GM12878 (cell line): ENCODE measurements at regions of chrX and their contacts with region 1.

Region 1: DNA sequence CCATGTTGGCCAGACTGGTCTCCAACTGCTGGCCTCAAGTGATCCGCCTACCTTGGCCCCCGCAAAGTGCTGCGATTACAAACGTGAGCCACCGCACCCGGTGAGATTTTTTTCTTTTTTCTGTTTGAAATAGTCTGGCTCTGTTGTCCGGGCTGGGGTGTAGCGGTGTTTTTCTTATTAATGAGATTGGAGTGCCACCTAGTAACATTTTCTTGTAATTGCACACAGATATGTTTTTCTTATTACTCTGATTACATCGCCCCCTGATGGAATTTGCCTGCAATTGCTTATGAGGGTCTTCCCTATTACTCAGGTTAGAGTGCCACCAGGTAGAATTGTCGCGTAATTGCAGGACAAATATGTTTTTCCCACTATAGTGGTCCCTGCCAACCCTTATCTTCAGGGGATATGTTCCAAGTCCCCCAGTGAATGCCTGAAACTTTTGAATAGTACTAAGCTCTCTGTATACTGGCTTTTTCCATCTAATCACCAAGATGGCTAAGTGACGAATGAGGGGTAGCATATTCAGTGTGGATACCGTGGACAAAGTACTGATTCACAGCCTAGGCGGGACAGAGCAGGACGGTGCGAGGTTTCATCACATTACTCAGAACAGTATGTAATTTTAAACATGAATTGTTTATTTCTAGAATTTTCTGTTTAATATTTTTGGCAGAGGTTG is 8.6 kb upstream of the PDHA1 start:
- DNase-seq: peak; percentile 15
- ATAC-seq: peak; percentile 83
- H3K4me3 ChIP-seq: no peak overlapping the region
- H3K27ac ChIP-seq: no peak overlapping the region
- H3K4me1 ChIP-seq: no peaks in the 10 kb centered on the region
- H3K27me3 ChIP-seq: no peaks in the 10 kb centered on the region
- CTCF ChIP-seq: peak; percentile 51 to 77 (median 52)
- EP300 ChIP-seq: no peak
- POLR2A ChIP-seq: no peak
- RAD21 ChIP-seq: peak; percentile 45

Region 2: DNA sequence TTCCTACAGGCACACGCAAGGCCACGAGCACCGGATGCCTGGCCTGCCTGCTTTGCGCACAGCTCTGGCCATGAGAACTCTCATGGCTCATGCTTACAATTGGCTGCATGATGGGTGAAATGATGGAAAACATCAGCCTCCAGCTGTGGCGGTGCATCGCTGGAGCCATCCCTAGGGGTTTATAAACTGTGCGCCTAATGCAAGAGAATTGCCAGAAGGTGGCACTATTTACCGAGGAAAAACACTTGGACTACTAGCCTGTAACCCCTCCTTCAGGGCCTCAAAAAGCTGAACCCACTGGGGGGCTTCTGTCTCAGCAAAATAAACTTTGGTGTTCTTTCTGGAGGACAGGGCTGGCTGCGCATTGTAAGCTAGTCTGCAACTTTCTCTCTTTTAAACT is 403.1 kb before region 1 on chrX:
- CTCF ChIA-PET with region 1: interaction called, 10 read pairs
- POLR2A ChIA-PET with region 1: no interaction called
- RAD21 ChIA-PET with region 1: no interaction called
- SMC1A ChIA-PET with region 1: no interaction called
- in situ Hi-C with region 1: no loop called
- intact Hi-C with region 1: loop called (anchors 2 kb)
- DNase-seq: no peak
- ATAC-seq: peak; percentile 59
- H3K4me3 ChIP-seq: no peak overlapping the region
- H3K27ac ChIP-seq: no peak overlapping the region
- H3K4me1 ChIP-seq: no peaks in the 10 kb centered on the region
- H3K27me3 ChIP-seq: no peaks in the 10 kb centered on the region
- CTCF ChIP-seq: peak; percentile 20 to 40 (median 40); a peak in 5 of 6 replicates
- EP300 ChIP-seq: no peak
- POLR2A ChIP-seq: no peak
- RAD21 ChIP-seq: peak; percentile 47

Region 3: DNA sequence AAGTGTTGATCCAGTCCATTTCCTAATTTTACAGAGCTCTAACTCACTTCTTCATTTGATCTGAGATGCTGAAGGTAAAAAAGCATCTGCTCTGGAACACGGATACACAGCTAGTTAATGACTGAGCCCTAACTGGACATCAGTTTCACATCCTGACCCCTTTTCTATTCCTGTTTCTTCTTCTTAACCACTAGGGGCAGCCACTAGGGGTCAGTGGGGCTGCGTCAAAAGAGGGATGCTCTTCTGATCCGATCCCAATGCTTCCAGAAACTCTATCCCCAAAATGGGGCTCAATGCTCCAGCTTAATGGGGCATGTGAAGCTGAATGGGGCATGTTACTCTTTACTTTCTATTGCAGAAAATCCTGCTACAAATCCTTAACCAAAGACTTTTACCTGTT is 317.8 kb before region 1 on chrX:
- CTCF ChIA-PET with region 1: interaction called, 13 read pairs
- POLR2A ChIA-PET with region 1: no interaction called
- RAD21 ChIA-PET with region 1: no interaction called
- SMC1A ChIA-PET with region 1: interaction called, 4 read pairs
- in situ Hi-C with region 1: no loop called
- intact Hi-C with region 1: loop called (anchors 2 kb)
- DNase-seq: no peak
- ATAC-seq: peak; percentile 83
- H3K4me3 ChIP-seq: no peak overlapping the region
- H3K27ac ChIP-seq: no peak overlapping the region
- H3K4me1 ChIP-seq: no peaks in the 10 kb centered on the region
- H3K27me3 ChIP-seq: no peaks in the 10 kb centered on the region
- CTCF ChIP-seq: peak; percentile 49 to 55 (median 53)
- EP300 ChIP-seq: no peak
- POLR2A ChIP-seq: no peak
- RAD21 ChIP-seq: peak; percentile 63

Region 4: GRCh38 chrX:19040373-19040772 is 294.7 kb before region 1 on chrX:
- CTCF ChIA-PET with region 1: interaction called, 44 read pairs
- POLR2A ChIA-PET with region 1: no interaction called
- RAD21 ChIA-PET with region 1: interaction called, 17 read pairs
- SMC1A ChIA-PET with region 1: interaction called, 5 read pairs
- in situ Hi-C with region 1: loop called (anchors 5 kb)
- intact Hi-C with region 1: loop called (anchors 2 kb)
- DNase-seq: no peak
- ATAC-seq: no peak
- H3K4me3 ChIP-seq: no peak overlapping the region
- H3K27ac ChIP-seq: no peak overlapping the region
- H3K4me1 ChIP-seq: no peaks in the 10 kb centered on the region
- H3K27me3 ChIP-seq: no peaks in the 10 kb centered on the region
- CTCF ChIP-seq: peak in 2 of 3 experiments; percentile 14 to 39; a peak in 2 of 6 replicates
- EP300 ChIP-seq: no peak
- POLR2A ChIP-seq: no peak
- RAD21 ChIP-seq: peak; percentile 34; the same call in 1 of the 2 replicates

Region 5: DNA sequence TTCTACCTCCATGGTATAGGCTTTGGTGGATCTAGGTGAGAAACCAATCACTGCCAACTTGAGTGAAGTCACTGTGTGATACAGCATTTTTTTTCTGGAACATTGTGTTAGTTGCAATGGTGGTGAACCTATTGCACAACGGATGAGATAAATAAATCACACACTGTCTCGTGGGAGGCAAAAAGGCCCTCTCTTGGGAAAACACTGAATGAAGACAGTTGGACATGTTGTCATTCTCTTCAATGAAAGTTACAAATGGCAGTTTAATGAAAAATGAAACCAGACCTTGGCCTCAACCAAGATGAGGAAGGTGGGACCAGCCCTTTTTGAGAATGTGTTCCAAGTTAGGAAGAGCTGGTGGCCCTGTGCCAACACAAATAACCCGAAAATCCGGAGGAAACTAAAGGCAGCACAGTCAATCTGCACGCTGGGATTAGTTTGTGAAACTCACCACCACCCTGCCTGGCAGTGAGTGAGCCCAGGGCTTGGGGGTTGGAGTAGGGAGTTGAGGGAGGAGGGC is 207.4 kb before region 1 on chrX:
- CTCF ChIA-PET with region 1: no interaction called
- POLR2A ChIA-PET with region 1: no interaction called
- RAD21 ChIA-PET with region 1: no interaction called
- SMC1A ChIA-PET with region 1: no interaction called
- in situ Hi-C with region 1: no loop called
- intact Hi-C with region 1: no loop called
- DNase-seq: no peak
- ATAC-seq: 0 out of 3 replicates have a peak, but pooled peaks have one; percentile 19
- H3K4me3 ChIP-seq: no peak overlapping the region
- H3K27ac ChIP-seq: no peak overlapping the region
- H3K4me1 ChIP-seq: no peaks in the 10 kb centered on the region
- H3K27me3 ChIP-seq: no peaks in the 10 kb centered on the region; a peak in 1 of 4 replicates
- CTCF ChIP-seq: no peak
- EP300 ChIP-seq: no peak
- POLR2A ChIP-seq: no peak
- RAD21 ChIP-seq: no peak

Region 6: GRCh38 chrX:19172741-19173140 is 162.3 kb before region 1 on chrX:
- CTCF ChIA-PET with region 1: no interaction called
- POLR2A ChIA-PET with region 1: no interaction called
- RAD21 ChIA-PET with region 1: no interaction called
- SMC1A ChIA-PET with region 1: no interaction called
- in situ Hi-C with region 1: no loop called
- intact Hi-C with region 1: no loop called
- DNase-seq: no peak
- ATAC-seq: no peak
- H3K4me3 ChIP-seq: no peak overlapping the region
- H3K27ac ChIP-seq: no peak overlapping the region
- H3K4me1 ChIP-seq: no peaks in the 10 kb centered on the region
- H3K27me3 ChIP-seq: no peaks in the 10 kb centered on the region
- CTCF ChIP-seq: no peak
- EP300 ChIP-seq: no peak
- POLR2A ChIP-seq: no peak
- RAD21 ChIP-seq: no peak

Region 7: GRCh38 chrX:19194285-19195242 is 140.5 kb before region 1 on chrX:
- CTCF ChIA-PET with region 1: interaction called, 14 read pairs
- POLR2A ChIA-PET with region 1: no interaction called
- RAD21 ChIA-PET with region 1: no interaction called
- SMC1A ChIA-PET with region 1: interaction called, 3 read pairs
- in situ Hi-C with region 1: no loop called
- intact Hi-C with region 1: loop called (anchors 10 kb)
- DNase-seq: peak; percentile 47
- ATAC-seq: peak; percentile 75
- H3K4me3 ChIP-seq: no peak overlapping the region
- H3K27ac ChIP-seq: peak overlapping the region; percentile 68
- H3K4me1 ChIP-seq: peaks cover 7% of the 10 kb centered on the region; the same call in 1 of the 2 replicates
- H3K27me3 ChIP-seq: no peaks in the 10 kb centered on the region
- CTCF ChIP-seq: peak; percentile 8 to 19 (median 14); a peak in 2 of 6 replicates
- EP300 ChIP-seq: peak; percentile 45 to 49; a peak in 2 of 4 replicates
- POLR2A ChIP-seq: no peak
- RAD21 ChIP-seq: peak; percentile 43; the same call in 1 of the 2 replicates